WTC11 (cell line): ENCODE measurements at regions of chr18 and their contacts with region 1.

Region 1: GRCh38 chr18:63004466-63005089 is 289.2 kb downstream of the PHLPP1 start:
- DNase-seq: no peak
- ATAC-seq: peak; percentile 39; the same call in 1 of the 2 replicates
- H3K4me3 Mint-ChIP-seq: no peak overlapping the region
- H3K27ac Mint-ChIP-seq: no peak overlapping the region
- H3K4me1 Mint-ChIP-seq: peaks cover 9% of the 10 kb centered on the region
- H3K27me3 Mint-ChIP-seq: no peaks in the 10 kb centered on the region
- CTCF ChIP-seq: no peak

Region 2: DNA sequence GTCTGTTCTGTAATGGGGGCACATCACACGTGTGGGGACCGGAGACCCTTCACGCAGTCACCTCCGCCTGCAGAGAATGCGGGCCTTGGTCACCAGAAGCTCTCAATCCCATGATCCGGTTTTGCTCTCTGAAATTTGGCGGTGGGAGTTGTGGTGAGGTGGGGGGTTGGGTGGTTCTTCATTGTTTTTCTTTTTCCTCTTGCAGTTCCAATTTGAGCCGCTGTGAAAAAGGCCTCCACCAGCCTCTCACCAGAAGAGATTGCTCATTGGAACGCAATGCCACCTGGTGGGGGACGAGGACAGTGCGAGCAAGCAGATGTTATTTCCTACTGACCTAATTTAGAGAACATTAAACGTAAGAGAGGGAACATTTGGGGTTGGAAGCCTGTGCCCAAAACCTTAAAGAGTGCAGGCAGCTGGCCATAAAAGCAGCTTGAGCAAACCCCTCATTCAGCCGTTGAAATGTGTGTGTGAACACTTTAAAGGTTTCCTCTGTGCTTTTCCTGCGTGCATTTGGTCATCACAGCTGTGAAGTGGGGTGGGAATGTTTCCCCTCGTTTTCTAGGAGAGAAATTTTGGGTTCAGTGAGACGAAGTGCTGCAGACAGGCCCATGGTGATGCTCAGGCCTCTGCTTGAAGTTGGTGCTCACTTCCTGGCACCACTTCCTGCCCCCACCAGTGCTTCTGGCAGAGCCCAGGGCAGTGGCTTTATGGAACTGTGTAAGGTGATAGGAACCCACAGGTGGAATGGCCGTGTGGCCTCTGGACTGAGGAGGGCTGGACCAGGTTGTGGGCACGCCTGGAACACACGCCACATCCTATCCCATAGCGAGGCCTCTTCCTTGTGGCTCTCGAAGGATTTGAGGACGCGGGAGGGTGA is 420.1 kb before region 1 on chr18:
- CTCF ChIA-PET with region 1: interaction called, 13 read pairs
- POLR2A ChIA-PET with region 1: no interaction called
- DNase-seq: peak; percentile 93
- ATAC-seq: peak; percentile 83
- H3K4me3 Mint-ChIP-seq: peak overlapping the region; percentile 54
- H3K27ac Mint-ChIP-seq: peak overlapping the region; percentile 85
- H3K4me1 Mint-ChIP-seq: peaks cover 29% of the 10 kb centered on the region
- H3K27me3 Mint-ChIP-seq: no peaks in the 10 kb centered on the region
- CTCF ChIP-seq: peak; percentile 80

Region 3: GRCh38 chr18:63025251-63026090 is 20.9 kb after region 1 on chr18:
- CTCF ChIA-PET with region 1: no interaction called
- POLR2A ChIA-PET with region 1: no interaction called
- DNase-seq: peak; percentile 57
- ATAC-seq: peak; percentile 89
- H3K4me3 Mint-ChIP-seq: no peak overlapping the region
- H3K27ac Mint-ChIP-seq: no peak overlapping the region
- H3K4me1 Mint-ChIP-seq: peaks cover 2% of the 10 kb centered on the region
- H3K27me3 Mint-ChIP-seq: peaks cover 17% of the 10 kb centered on the region
- CTCF ChIP-seq: no peak